SK-N-SH (cell line): ENCODE measurements at regions of chr1 and their contacts with region 1.

Region 1: DNA sequence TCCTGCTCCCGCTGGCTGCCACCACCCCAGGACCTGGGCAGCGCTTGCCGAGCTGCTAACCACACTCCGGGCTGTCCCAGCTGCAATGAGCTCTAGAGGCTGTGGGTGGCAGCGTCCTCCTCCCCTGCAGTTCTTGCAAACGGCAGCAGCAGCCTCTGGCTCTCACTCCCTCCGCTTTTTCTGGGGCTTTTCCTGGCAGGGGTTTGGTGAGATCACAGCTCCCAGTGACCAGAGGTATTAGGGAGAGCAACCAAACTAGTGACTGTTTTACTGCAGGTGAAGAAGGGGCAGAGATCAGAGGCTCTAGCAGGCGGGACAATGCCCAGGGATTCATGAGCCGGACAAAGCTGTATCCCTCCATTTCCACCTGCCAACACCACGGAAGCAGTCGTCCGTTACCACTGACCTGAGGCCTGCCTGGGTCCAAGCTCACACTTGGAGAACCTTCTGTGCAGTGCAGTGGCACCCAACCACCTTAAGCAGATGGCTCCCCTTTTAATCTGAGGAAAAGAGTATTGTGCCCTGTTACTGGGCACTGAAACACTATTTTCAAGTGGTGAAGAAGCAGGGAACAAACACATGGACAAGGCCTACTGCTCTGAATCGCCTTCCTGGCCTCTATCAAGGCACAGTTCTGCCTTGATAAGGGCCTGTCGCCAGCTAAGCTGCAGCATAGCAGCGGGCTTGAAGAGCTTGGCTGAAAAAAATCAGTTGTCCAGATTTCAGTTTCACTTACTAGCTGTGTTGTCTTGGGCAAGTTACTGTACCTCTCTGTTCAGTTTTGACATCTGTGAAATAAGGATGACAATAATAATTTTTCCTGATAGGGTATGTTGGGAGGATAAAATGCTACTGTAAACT is at the start of gene F5:
- DNase-seq: peak; percentile 58
- H3K4me3 ChIP-seq: peak within 1 kb of the TSS; percentile 30 to 52
- H3K27ac ChIP-seq: no peak within 1 kb of the TSS
- H3K4me1 ChIP-seq: peaks cover 0 to 8% of the 10 kb centered on the region in 2 experiments; a peak in 1 of 4 replicates
- H3K27me3 ChIP-seq: peaks cover 24% of the 10 kb centered on the region; the same call in 1 of the 2 replicates
- CTCF ChIP-seq: peak; percentile 62
- EP300 ChIP-seq: no peak
- RAD21 ChIP-seq: peak; percentile 52
- polyA plus RNA-seq, gene F5: under 0.01 TPM in 1 of 2 replicates, not detected in the other

Region 2: DNA sequence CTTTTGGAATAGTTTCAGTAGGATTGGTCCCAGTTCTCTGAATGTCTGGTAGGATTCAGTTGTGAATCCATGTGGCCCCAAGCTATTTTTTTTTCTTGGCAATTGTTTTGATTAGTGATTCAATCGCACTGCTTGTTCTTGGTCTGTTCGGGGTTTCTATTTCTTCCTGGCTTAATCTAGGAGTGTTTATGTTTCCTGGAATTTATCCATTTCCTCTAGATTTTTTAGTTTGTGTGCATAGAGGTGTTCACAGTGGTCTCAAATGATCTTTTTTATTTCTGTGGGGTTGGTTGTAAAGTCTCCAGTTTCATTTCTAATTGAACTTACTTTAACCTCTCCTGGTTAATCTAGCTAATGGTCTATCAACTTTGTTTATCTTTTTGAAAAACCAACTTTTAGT is 336.6 kb before region 1 on chr1:
- CTCF ChIA-PET with region 1: no interaction called
- POLR2A ChIA-PET with region 1: no interaction called
- DNase-seq: no peak
- H3K4me3 ChIP-seq: no peak overlapping the region
- H3K27ac ChIP-seq: no peak overlapping the region
- H3K4me1 ChIP-seq: no peaks in the 10 kb centered on the region
- H3K27me3 ChIP-seq: no peaks in the 10 kb centered on the region
- CTCF ChIP-seq: no peak
- EP300 ChIP-seq: no peak
- RAD21 ChIP-seq: no peak

Region 3: DNA sequence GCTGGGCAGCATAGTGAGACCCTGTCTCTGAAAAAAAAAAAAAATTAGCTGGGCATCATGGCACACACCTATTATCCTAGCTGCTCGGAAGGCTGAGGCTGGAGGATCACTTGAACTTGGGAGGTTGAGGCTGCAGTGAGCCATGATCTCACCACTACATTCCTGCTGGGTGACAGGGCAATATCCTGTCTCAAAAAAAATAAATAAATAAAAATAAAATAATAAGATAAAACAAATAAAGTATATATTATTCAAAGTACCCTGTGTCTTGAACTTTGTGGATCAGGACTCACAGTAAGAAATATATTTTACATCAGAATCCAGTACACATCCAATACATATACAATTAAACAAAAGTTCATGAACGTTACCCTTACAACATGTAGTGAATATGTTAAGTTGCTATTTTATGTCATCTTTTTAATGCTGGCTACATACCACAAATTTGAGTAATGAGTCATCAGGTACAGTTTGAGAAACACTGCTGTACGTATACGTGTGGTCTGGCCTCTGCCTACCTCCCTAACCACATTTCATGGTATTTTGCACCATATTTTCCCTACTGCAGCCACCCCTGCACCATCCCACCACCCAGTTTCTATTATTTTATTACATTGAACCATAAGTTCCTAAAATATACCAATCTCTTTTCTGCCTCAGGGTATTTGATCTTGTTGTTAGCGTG is 223.4 kb before region 1 on chr1:
- CTCF ChIA-PET with region 1: no interaction called
- POLR2A ChIA-PET with region 1: no interaction called
- DNase-seq: no peak
- H3K4me3 ChIP-seq: no peak overlapping the region
- H3K27ac ChIP-seq: peak overlapping the region; percentile 64 to 77
- H3K4me1 ChIP-seq: peaks cover 12 to 17% of the 10 kb centered on the region in 2 experiments; a peak in 3 of 4 replicates
- H3K27me3 ChIP-seq: no peaks in the 10 kb centered on the region
- CTCF ChIP-seq: no peak
- EP300 ChIP-seq: no peak
- RAD21 ChIP-seq: no peak

Region 4: GRCh38 chr1:169711469-169712281 is 125.0 kb after region 1 on chr1 and contains the start of gene SELL:
- CTCF ChIA-PET with region 1: interaction called, 11 read pairs
- POLR2A ChIA-PET with region 1: no interaction called
- DNase-seq: peak; percentile 30
- H3K4me3 ChIP-seq: peak within 1 kb of the TSS; percentile 18 to 54; a peak in 3 of 4 replicates
- H3K27ac ChIP-seq: no peak within 1 kb of the TSS
- H3K4me1 ChIP-seq: no peaks in the 10 kb centered on the region
- H3K27me3 ChIP-seq: no peaks in the 10 kb centered on the region
- CTCF ChIP-seq: peak; percentile 74
- EP300 ChIP-seq: no peak
- RAD21 ChIP-seq: peak; percentile 66
- polyA plus RNA-seq, gene SELL: 0.52 and 0.58 TPM in 2 replicates

Region 5: DNA sequence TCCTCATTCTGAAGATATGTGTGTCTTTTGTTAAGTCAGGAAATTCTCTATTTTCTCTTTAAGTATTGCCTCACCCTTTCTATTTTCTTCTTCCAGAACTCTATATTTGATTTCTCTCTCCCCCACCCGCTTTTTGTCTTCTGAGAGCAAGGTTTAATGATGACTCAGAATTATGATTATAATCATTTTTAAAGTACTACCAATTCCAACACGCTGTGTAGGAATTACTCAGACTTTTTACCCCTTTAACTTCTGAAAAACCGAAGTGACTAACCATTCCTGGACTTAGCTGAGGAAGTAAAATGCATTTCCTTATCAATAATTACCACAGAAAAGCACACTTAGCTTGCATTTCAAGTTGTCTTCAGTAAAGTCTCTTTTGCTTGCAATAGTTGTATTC is 327.9 kb after region 1 on chr1:
- CTCF ChIA-PET with region 1: no interaction called
- POLR2A ChIA-PET with region 1: no interaction called
- DNase-seq: no peak
- H3K4me3 ChIP-seq: no peak overlapping the region
- H3K27ac ChIP-seq: peak overlapping the region; percentile 47 to 76; a peak in 3 of 4 replicates
- H3K4me1 ChIP-seq: peaks cover 0 to 11% of the 10 kb centered on the region in 2 experiments; a peak in 3 of 4 replicates
- H3K27me3 ChIP-seq: no peaks in the 10 kb centered on the region
- CTCF ChIP-seq: no peak
- EP300 ChIP-seq: peak in 1 of 2 experiments; percentile 58; a peak in 1 of 4 replicates
- RAD21 ChIP-seq: no peak